ENCODE measurements at regions of chr6 and their contacts with region 1.

Region 1: DNA sequence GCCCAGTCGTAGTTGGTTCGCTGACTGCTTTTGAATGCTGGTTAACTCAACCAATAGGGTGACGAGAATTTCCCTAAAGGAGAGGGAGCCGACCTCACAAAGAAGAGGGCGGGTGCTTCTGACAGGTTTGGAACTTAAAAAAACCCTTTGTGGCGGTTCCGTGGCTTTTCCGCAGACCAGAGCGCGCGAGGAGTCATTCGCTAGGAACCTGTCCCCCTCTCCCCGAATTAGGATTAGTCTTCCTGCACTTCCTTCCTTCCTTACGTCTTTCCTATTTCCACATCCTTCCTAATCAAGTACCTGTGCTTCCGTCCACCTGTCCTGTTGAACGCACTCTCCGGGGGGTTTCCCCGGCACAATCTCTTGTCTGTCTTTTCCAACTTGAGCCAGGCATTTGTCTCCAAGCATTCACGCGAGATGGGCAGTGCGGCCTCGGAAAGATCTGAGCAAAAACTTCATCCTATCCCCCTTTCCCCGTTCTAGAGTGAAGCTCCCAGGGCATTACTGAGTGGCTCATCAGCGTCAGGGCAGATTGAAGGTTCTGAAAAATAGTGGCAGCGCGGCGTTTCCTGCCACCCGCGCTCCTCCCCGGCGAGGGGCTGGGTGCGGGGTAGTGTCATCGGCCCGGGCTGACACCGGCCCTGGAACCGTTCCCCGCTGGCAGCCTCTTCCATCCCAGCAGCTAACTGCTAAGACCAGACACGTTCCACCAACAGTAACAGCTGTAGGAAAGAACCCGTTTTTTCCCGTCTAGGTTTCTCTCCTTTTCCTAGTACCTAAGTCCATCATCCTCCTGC is 1.5 kb upstream of the STXBP5 start:
- DNase-seq: peak; percentile 79 to 85 (median 82)
- ATAC-seq: peak; percentile 96 to 97
- H3K4me3 ChIP-seq: peak overlapping the region; percentile 92
- H3K27ac ChIP-seq: peak overlapping the region; percentile 97
- H3K4me1 ChIP-seq: peaks cover 2% of the 10 kb centered on the region
- H3K27me3 ChIP-seq: no peaks in the 10 kb centered on the region

Region 2: DNA sequence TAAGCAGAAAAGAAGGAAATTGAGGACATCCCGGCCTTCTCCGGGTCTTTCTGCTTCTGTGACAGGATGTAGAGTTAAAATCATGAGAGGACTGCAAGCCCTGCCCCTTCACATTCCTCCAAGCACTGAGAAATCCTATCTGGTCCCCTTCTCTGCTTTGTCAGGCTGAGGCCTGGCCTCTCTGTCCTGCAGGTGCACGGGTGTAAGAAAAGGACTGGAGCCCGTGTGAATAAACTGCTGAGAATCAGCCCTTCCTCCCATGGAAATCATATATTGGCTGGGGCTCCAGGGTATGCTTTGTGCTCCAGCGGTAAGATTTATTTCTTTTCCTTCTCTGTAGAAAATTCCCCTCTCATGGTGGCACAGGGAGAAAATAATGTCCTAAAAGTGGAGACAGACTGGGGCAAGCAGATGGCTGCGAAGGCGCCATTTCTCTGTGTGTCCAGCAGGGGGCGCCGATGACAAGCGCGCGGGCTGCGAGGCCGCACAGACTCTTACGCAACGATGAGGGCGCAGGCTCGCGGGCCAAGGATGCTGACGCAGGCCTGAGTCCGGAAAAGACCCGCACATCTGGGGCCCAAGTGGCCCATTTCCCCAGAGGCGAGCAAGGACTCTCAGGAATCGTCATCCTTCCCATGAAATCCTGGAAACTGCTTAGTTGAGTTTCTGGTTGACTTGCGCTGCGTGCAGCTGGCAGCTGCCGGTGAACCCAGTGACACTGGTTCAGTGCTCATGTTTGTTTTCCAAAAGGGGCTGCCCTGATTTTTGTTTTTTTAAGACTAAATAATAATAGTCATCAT is 345.3 kb before region 1 on chr6:
- intact Hi-C with region 1: loop called in 1 of 4 experiments (anchors 10 kb)
- DNase-seq: peak; percentile 89 to 95 (median 94)
- ATAC-seq: peak; percentile 96 to 97
- H3K4me3 ChIP-seq: peak overlapping the region; percentile 48
- H3K27ac ChIP-seq: peak overlapping the region; percentile 79
- H3K4me1 ChIP-seq: no peaks in the 10 kb centered on the region
- H3K27me3 ChIP-seq: no peaks in the 10 kb centered on the region

Region 3: DNA sequence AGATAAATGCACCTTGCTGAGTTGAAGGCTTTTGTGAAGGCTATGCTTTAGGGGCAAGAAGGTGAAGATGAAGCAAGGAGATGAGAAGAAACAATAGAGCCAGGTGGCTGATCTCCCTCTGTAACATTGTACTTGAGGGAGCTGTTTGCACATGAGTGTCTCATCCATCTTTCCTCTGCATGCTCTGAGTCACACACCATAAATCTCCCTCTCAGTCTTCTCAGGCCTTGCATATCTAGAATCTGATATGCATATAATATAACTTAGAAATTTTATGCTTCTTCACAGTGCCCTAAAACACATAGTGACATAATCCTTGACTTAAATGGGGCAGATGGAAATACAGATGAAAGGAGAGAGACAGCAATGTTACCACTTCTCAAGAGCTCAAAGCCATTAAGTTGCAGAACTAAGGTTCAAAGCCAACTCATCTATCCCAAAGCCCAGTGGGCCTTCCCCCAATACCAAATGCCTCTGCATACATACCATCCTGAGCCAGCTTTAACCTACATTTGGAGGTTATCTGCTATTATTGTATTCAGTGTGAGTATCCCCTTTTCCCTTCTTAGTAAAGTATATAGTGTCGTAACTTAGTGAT is 60.9 kb before region 1 on chr6:
- intact Hi-C with region 1: no loop called
- DNase-seq: no peak
- ATAC-seq: no peak
- H3K4me3 ChIP-seq: no peak overlapping the region
- H3K27ac ChIP-seq: no peak overlapping the region
- H3K4me1 ChIP-seq: no peaks in the 10 kb centered on the region
- H3K27me3 ChIP-seq: no peaks in the 10 kb centered on the region

Region 4: GRCh38 chr6:147279427-147279826 is 76.7 kb after region 1 on chr6:
- intact Hi-C with region 1: loop called in 1 of 4 experiments (anchors 10 kb)
- DNase-seq: no peak
- ATAC-seq: no peak
- H3K4me3 ChIP-seq: no peak overlapping the region
- H3K27ac ChIP-seq: no peak overlapping the region
- H3K4me1 ChIP-seq: no peaks in the 10 kb centered on the region
- H3K27me3 ChIP-seq: no peaks in the 10 kb centered on the region

Measured in right cardiac atrium (tissue), 5 donors.